ENCODE measurements at regions of chr6 and their contacts with region 1.

Region 1: DNA sequence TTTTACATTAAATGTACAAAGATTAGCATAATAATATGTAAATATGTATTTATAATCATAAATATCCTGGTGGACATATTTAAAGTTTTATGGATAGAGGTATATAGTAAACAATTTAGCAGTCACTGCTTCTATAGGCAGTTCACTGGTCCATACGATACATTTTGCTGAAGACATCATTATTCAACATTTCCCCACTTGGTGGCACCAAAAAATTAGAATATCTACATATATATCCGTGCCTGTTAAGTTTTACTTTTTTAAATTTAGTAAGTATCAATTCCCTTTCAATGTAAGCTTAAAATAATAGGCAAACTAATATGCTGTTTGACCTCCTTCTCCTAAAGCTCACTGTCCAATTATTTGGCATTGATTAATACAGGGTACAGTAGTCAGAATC is 64.2 kb downstream of the LMBRD1 start:
- DNase-seq: peak in 5 of 9 donors; percentile 3 to 25 (median 10)
- ATAC-seq: no peak
- H3K4me3 ChIP-seq: no peak overlapping the region
- H3K4me3 Mint-ChIP-seq: no peak overlapping the region
- H3K27ac ChIP-seq: no peak overlapping the region
- H3K27ac Mint-ChIP-seq: no peak overlapping the region
- H3K4me1 ChIP-seq: no peaks in the 10 kb centered on the region
- H3K4me1 Mint-ChIP-seq: peaks cover 0 to 9% (median 6%) of the 10 kb centered on the region in 7 donors
- H3K27me3 ChIP-seq: no peaks in the 10 kb centered on the region
- H3K27me3 Mint-ChIP-seq: no peaks in the 10 kb centered on the region

Region 2: DNA sequence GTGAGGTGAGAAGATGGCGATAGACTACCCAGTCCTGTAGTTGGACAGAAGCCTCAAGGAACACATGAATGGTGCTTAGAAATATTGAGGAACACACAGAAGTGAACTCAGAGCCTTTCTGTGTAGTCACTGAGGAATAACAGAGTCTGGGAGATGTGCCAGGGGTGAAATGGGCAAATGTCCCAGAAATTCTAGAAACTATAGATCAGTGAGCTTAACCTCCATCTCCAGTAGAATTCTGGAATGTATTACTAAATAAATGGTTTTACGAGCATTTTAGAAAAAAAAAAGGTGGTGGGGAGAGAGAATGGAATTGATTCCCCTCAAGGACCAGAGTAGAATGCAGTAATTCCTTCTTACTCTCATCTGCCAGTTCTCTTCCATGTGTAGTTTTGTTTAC is 315.9 kb before region 1 on chr6:
- CTCF ChIA-PET with region 1: no interaction called
- POLR2A ChIA-PET with region 1: no interaction called
- intact Hi-C with region 1: no loop called
- DNase-seq: no peak
- ATAC-seq: no peak
- H3K4me3 ChIP-seq: no peak overlapping the region
- H3K4me3 Mint-ChIP-seq: no peak overlapping the region
- H3K27ac ChIP-seq: no peak overlapping the region
- H3K27ac Mint-ChIP-seq: no peak overlapping the region
- H3K4me1 ChIP-seq: no peaks in the 10 kb centered on the region
- H3K4me1 Mint-ChIP-seq: no peaks in the 10 kb centered on the region
- H3K27me3 ChIP-seq: no peaks in the 10 kb centered on the region
- H3K27me3 Mint-ChIP-seq: no peaks in the 10 kb centered on the region

Region 3: DNA sequence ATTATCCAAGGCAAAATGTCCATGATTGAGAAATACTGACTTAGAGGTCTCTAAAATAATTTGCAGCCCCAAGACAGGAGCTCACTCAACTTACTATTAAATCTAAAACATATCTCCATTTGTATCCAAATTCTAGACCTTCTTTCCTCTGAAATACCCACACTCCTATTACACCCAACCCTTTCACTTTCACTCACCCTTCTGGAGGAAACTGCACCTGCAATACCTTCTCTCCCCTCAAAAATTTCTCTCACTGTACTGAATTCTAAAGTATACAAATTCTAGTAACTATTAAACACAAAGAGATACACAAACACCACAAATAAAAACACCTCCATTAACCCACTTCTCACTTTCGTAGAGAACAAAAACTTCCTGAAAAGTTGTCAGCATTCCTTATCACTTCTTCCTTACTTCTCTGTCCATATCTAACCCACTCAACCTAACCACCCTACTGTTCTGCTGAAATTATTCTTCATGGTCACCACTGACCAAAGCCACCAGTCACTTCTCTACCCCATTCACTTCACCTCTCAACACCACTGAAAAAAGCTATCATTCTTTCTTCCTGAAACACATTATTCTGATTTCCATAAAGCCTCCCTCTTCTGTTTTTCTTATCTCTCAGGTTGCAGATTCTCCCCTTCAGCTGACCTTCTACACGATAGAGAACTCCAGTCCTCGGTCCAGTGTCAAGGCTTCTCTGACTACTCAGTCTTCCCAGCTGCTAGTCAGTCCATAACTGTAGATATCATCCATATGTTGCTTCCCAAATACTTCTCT is 52.1 kb after region 1 on chr6:
- CTCF ChIA-PET with region 1: interaction called, 3 read pairs
- POLR2A ChIA-PET with region 1: no interaction called
- intact Hi-C with region 1: loop called in 1 of 2 experiments (anchors 5 kb)
- DNase-seq: no peak
- ATAC-seq: peak; percentile 20
- H3K4me3 ChIP-seq: no peak overlapping the region
- H3K4me3 Mint-ChIP-seq: peak overlapping the region in 7 of 10 donors; percentile 1 to 67 (median 5)
- H3K27ac ChIP-seq: no peak overlapping the region
- H3K27ac Mint-ChIP-seq: peak overlapping the region in 5 of 9 donors; percentile 3 to 41 (median 8)
- H3K4me1 ChIP-seq: peaks cover 5 to 19% of the 10 kb centered on the region in 2 donors
- H3K4me1 Mint-ChIP-seq: peaks cover 31 to 74% (median 58%) of the 10 kb centered on the region in 7 donors
- H3K27me3 ChIP-seq: no peaks in the 10 kb centered on the region
- H3K27me3 Mint-ChIP-seq: no peaks in the 10 kb centered on the region

Region 4: GRCh38 chr6:69866770-69867638 is 134.4 kb after region 1 on chr6:
- CTCF ChIA-PET with region 1: interaction called, 5 read pairs
- POLR2A ChIA-PET with region 1: no interaction called
- intact Hi-C with region 1: loop called in 1 of 2 experiments (anchors 1 kb)
- DNase-seq: peak; percentile 42 to 64 (median 55)
- ATAC-seq: peak; percentile 84
- H3K4me3 ChIP-seq: peak overlapping the region; percentile 55
- H3K4me3 Mint-ChIP-seq: peak overlapping the region; percentile 79 to 98 (median 89)
- H3K27ac ChIP-seq: peak overlapping the region; percentile 4
- H3K27ac Mint-ChIP-seq: peak overlapping the region in 7 of 9 donors; percentile 15 to 85 (median 51)
- H3K4me1 ChIP-seq: peaks cover 5 to 6% of the 10 kb centered on the region in 2 donors
- H3K4me1 Mint-ChIP-seq: peaks cover 15 to 24% (median 20%) of the 10 kb centered on the region in 7 donors
- H3K27me3 ChIP-seq: no peaks in the 10 kb centered on the region
- H3K27me3 Mint-ChIP-seq: peaks cover 8 to 66% (median 34%) of the 10 kb centered on the region in 5 donors

Region 5: GRCh38 chr6:69985180-69985579 is 252.5 kb after region 1 on chr6:
- CTCF ChIA-PET with region 1: interaction called, 3 read pairs
- POLR2A ChIA-PET with region 1: no interaction called
- intact Hi-C with region 1: loop called in 1 of 2 experiments (anchors 10 kb)
- DNase-seq: no peak
- ATAC-seq: no peak
- H3K4me3 ChIP-seq: no peak overlapping the region
- H3K4me3 Mint-ChIP-seq: no peak overlapping the region
- H3K27ac ChIP-seq: no peak overlapping the region
- H3K27ac Mint-ChIP-seq: no peak overlapping the region
- H3K4me1 ChIP-seq: no peaks in the 10 kb centered on the region
- H3K4me1 Mint-ChIP-seq: peaks cover 0 to 4% (median 0%) of the 10 kb centered on the region in 7 donors
- H3K27me3 ChIP-seq: no peaks in the 10 kb centered on the region
- H3K27me3 Mint-ChIP-seq: no peaks in the 10 kb centered on the region

Region 6: GRCh38 chr6:70107852-70108629 is 375.4 kb after region 1 on chr6:
- CTCF ChIA-PET with region 1: interaction called, 4 read pairs
- POLR2A ChIA-PET with region 1: no interaction called
- intact Hi-C with region 1: loop called (anchors 1 to 5 kb)
- DNase-seq: peak in 6 of 9 donors; percentile 4 to 43 (median 17)
- ATAC-seq: no peak
- H3K4me3 ChIP-seq: no peak overlapping the region
- H3K4me3 Mint-ChIP-seq: no peak overlapping the region
- H3K27ac ChIP-seq: no peak overlapping the region
- H3K27ac Mint-ChIP-seq: no peak overlapping the region
- H3K4me1 ChIP-seq: no peaks in the 10 kb centered on the region
- H3K4me1 Mint-ChIP-seq: no peaks in the 10 kb centered on the region
- H3K27me3 ChIP-seq: no peaks in the 10 kb centered on the region
- H3K27me3 Mint-ChIP-seq: peaks cover 0 to 21% (median 14%) of the 10 kb centered on the region in 5 donors

Region 7: DNA sequence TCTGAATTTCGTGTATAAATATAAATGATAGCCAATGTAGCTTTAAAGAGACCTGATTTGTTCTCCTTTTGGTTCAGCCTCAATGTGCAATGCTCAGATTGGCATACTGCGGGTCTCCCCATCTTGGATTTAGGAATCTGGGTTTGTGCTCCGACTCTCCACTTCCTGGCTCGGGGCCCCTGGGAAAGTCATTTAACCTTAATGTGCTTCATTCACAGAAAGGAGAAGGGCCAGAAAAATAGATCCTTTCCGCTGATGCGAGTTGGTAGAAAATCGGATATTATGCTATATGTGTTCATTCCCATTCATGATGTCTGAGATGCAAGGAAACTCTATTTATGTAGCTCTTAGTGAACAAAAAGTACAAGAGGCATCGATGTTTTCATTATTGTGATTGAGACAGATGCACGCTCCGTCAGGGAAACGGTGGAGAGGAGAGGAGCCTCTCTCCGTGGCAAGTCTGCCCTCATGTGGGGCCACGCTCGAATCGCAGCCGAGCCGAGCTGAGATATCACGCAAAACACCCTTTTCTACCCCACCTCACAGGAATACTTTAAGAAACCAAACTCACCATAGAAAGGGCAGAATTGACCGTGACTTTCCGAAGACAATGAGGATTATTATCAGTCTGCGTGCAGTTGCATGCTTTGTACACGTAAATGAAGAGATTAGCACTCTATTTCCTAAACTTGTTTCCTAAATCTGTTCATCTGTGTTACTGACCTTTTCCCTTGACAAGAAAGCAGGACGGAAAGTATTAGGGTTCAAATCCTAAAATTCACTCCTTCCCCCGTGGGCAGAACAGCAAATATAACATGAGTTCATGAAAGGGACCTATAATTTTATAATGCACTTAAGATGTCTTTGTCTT is 433.7 kb after region 1 on chr6:
- CTCF ChIA-PET with region 1: no interaction called
- POLR2A ChIA-PET with region 1: no interaction called
- intact Hi-C with region 1: loop called in 1 of 2 experiments (anchors 5 kb)
- DNase-seq: peak in 4 of 9 donors; percentile 3 to 23 (median 5)
- ATAC-seq: no peak
- H3K4me3 ChIP-seq: no peak overlapping the region
- H3K4me3 Mint-ChIP-seq: peak overlapping the region in 2 of 10 donors; percentile 14 to 19
- H3K27ac ChIP-seq: no peak overlapping the region
- H3K27ac Mint-ChIP-seq: no peak overlapping the region
- H3K4me1 ChIP-seq: no peaks in the 10 kb centered on the region
- H3K4me1 Mint-ChIP-seq: peaks cover 0 to 10% (median 5%) of the 10 kb centered on the region in 7 donors
- H3K27me3 ChIP-seq: peaks cover 0 to 3% of the 10 kb centered on the region in 2 donors
- H3K27me3 Mint-ChIP-seq: peaks cover 24 to 52% (median 33%) of the 10 kb centered on the region in 5 donors

Measured in naive thymus-derived CD4-positive, alpha-beta T cell (primary cell).